ENCODE measurements at regions of chr10 and their contacts with region 1.

Region 1: GRCh38 chr10:119199231-119199992 is 8.0 kb upstream of the GRK5 start:
- DNase-seq: peak; percentile 54 to 71
- H3K4me3 ChIP-seq: no peak overlapping the region
- H3K27ac ChIP-seq: no peak overlapping the region
- H3K4me1 ChIP-seq: peaks cover 0 to 5% (median 2%) of the 10 kb centered on the region in 4 donors
- H3K27me3 ChIP-seq: peaks cover 0 to 3% of the 10 kb centered on the region in 2 donors
- CTCF ChIP-seq: peak; percentile 73 to 85

Region 2: GRCh38 chr10:118835682-118836326 is 363.6 kb before region 1 on chr10:
- intact Hi-C with region 1: no loop called
- DNase-seq: no peak
- H3K4me3 ChIP-seq: no peak overlapping the region
- H3K27ac ChIP-seq: no peak overlapping the region
- H3K4me1 ChIP-seq: peaks cover 0 to 9% (median 7%) of the 10 kb centered on the region in 4 donors
- H3K27me3 ChIP-seq: no peaks in the 10 kb centered on the region
- CTCF ChIP-seq: no peak

Region 3: DNA sequence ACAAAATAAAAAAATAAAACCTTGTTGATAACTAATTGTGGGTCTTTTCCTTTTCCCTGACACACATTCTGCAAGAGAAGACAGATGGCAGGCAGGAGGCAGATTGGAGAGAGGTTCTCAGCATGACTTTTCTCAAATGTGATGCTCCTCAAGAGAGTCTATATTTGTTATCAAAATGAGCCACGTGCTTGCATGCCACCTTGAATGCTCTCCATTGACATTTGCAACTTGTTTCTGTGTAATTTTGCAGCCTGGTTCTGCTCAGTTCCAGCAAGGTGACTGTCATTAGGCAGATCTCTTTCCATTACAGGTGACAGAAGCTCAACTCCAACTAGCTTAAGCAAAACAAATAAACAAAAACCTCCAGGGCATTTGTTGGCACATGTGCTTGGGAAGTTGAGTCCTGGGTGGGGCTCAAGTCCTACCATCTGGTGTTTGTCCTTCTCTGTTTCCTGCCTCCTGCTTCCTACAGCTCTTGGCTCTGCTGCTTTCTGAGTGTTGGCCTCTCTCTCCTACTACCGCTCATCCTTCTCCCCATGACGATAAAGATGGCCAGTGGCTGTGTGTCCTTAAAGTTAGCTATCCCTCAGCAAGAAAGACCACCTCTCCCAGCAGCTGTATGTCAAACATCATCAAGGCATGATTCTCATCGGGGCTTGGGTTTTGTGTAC is 64.7 kb after region 1 on chr10:
- intact Hi-C with region 1: no loop called
- DNase-seq: peak in 1 of 2 donors; percentile 5
- H3K4me3 ChIP-seq: no peak overlapping the region
- H3K27ac ChIP-seq: no peak overlapping the region
- H3K4me1 ChIP-seq: peaks cover 0 to 18% (median 5%) of the 10 kb centered on the region in 4 donors
- H3K27me3 ChIP-seq: no peaks in the 10 kb centered on the region
- CTCF ChIP-seq: no peak

Region 4: GRCh38 chr10:119445311-119445934 is 246.0 kb after region 1 on chr10:
- intact Hi-C with region 1: loop called (anchors 2 kb)
- DNase-seq: peak; percentile 81 to 89
- H3K4me3 ChIP-seq: no peak overlapping the region
- H3K27ac ChIP-seq: peak overlapping the region in 1 of 2 donors; percentile 31
- H3K4me1 ChIP-seq: peaks cover 0 to 39% (median 30%) of the 10 kb centered on the region in 4 donors
- H3K27me3 ChIP-seq: no peaks in the 10 kb centered on the region
- CTCF ChIP-seq: peak; percentile 89 to 97

Region 5: GRCh38 chr10:119575506-119575905 is 376.1 kb after region 1 on chr10:
- intact Hi-C with region 1: loop called (anchors 10 kb)
- DNase-seq: no peak
- H3K4me3 ChIP-seq: no peak overlapping the region
- H3K27ac ChIP-seq: no peak overlapping the region
- H3K4me1 ChIP-seq: no peaks in the 10 kb centered on the region
- H3K27me3 ChIP-seq: no peaks in the 10 kb centered on the region
- CTCF ChIP-seq: no peak

Measured in tibial artery (tissue), 4 donors.